ENCODE measurements at regions of chr3 and their contacts with region 1.

Region 1: DNA sequence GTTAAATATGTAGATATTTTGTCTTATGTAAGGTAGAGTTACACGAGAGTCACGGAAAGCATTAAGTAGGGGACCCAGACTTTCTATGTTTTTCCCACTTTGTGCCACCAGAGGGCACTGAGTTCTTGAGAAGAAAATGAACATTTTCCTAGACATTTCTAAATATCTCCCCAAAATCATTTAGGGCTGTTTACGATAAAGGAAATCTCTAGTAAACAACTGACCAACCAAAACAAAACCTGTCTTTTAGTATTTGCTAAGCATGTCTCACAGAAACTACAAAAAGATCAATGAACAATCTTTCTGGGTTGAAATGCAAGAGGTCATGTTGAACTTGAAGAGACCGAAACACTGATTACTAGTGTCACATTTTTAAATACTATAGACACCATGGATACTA is 16.1 kb downstream of the POU1F1 start:
- DNase-seq: peak; percentile 66
- ATAC-seq: no peak
- H3K4me3 Mint-ChIP-seq: no peak overlapping the region
- H3K27ac Mint-ChIP-seq: no peak overlapping the region
- H3K4me1 Mint-ChIP-seq: peaks cover 3% of the 10 kb centered on the region
- H3K27me3 Mint-ChIP-seq: peaks cover 3% of the 10 kb centered on the region

Region 2: GRCh38 chr3:87236093-87236492 is 24.2 kb before region 1 on chr3:
- CTCF ChIA-PET with region 1: no interaction called
- DNase-seq: no peak
- ATAC-seq: no peak
- H3K4me3 Mint-ChIP-seq: no peak overlapping the region
- H3K27ac Mint-ChIP-seq: no peak overlapping the region
- H3K4me1 Mint-ChIP-seq: no peaks in the 10 kb centered on the region
- H3K27me3 Mint-ChIP-seq: no peaks in the 10 kb centered on the region

Region 3: DNA sequence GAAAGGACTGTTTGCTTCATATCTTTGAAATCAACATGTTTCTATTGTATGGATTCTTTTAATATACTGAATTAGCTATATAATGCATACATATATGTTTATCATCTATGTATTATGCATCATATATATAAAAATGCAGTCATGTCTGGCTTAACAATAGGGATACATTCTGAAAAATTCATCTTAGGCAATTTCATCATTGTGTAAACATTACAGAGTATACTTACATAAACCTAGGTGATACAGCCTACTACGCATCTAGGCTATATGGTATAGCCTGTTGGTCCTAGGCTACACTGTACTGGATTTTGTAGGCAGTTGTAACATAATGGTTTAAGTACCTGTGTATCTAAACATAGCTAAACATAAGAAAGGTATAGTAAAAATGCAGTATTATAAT is 11.4 kb before region 1 on chr3:
- CTCF ChIA-PET with region 1: interaction called, 18 read pairs
- DNase-seq: no peak
- ATAC-seq: no peak
- H3K4me3 Mint-ChIP-seq: no peak overlapping the region
- H3K27ac Mint-ChIP-seq: no peak overlapping the region
- H3K4me1 Mint-ChIP-seq: peaks cover 2% of the 10 kb centered on the region
- H3K27me3 Mint-ChIP-seq: no peaks in the 10 kb centered on the region

Region 4: DNA sequence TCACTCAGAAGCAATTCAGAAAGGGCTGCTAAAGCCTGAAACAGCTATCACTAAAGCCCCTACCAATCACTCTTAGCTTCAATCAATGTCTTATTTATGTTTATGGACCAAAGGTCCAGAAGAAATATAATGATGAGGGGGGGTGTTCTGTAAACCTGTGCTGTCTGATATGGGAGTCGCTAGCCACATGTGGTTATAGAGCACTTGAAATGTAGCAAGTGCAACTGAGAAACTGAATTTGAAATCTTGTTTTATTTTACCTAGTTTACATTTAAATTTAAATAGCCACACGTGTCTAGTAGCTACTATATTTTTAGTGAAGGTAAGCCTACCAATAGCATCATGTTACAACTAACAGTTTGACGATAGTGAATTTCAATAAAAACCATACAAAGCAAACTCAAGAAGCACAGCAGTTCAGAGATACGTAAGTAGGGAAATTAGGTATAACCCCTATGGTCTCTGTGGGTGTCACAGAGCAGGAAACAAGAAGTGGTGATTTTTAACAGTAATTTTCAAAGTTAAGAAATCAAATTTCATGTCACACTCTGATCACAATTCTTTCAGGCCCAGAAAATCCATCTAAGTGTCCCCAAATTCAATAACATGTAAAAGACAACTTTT is 12.6 kb after region 1 on chr3:
- CTCF ChIA-PET with region 1: interaction called, 16 read pairs
- DNase-seq: no peak
- ATAC-seq: no peak
- H3K4me3 Mint-ChIP-seq: no peak overlapping the region
- H3K27ac Mint-ChIP-seq: no peak overlapping the region
- H3K4me1 Mint-ChIP-seq: peaks cover 53% of the 10 kb centered on the region
- H3K27me3 Mint-ChIP-seq: no peaks in the 10 kb centered on the region

Region 5: GRCh38 chr3:87503900-87504508 is 243.7 kb after region 1 on chr3:
- CTCF ChIA-PET with region 1: interaction called, 12 read pairs
- DNase-seq: no peak
- ATAC-seq: peak; percentile 63
- H3K4me3 Mint-ChIP-seq: no peak overlapping the region
- H3K27ac Mint-ChIP-seq: no peak overlapping the region
- H3K4me1 Mint-ChIP-seq: no peaks in the 10 kb centered on the region
- H3K27me3 Mint-ChIP-seq: no peaks in the 10 kb centered on the region